ENCODE measurements at regions of chr9 and their contacts with region 1.

Region 1: DNA sequence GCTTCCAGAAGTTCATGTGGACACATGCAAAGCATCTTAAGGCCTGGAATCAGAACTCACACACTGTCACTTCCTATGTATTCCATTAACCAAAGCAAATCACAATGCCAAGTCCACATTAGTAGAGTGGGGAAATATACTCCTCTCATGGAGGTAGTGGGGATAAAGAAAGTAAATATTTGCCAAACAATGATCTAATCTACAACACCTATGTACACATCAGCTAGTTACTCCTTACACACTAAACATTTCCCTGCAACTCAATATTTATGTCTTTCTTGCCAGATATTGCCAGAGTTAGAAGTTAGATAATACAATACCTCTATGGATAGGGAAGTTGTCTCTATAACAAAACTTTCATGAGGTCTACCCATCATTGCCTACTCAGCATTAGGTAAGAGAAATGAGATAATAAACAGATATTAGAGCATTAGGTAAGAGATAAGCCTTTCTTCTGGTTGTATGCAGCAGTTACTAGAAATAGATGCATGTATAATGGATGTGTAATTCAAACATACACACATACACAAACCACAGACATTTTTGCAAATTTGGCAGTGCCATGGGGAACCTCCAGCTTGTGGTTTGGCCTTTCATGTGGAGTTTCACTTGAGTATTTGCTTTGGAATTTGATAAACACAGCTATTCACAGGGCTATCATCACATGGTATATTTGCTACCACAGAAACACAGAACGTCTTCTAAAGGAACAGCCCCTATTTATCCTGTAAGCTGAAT is 196.5 kb downstream of the TLE1 start:
- DNase-seq: peak; percentile 90
- ATAC-seq: peak; percentile 83
- H3K4me3 ChIP-seq: no peak overlapping the region
- H3K27ac ChIP-seq: peak overlapping the region; percentile 90
- H3K4me1 ChIP-seq: peaks cover 40% of the 10 kb centered on the region
- H3K27me3 ChIP-seq: no peaks in the 10 kb centered on the region
- CTCF ChIP-seq: no peak

Region 2: GRCh38 chr9:81058782-81059181 is 434.1 kb before region 1 on chr9:
- CTCF ChIA-PET with region 1: no interaction called
- POLR2A ChIA-PET with region 1: no interaction called
- intact Hi-C with region 1: no loop called
- DNase-seq: no peak
- ATAC-seq: no peak
- H3K4me3 ChIP-seq: no peak overlapping the region
- H3K27ac ChIP-seq: no peak overlapping the region
- H3K4me1 ChIP-seq: no peaks in the 10 kb centered on the region
- H3K27me3 ChIP-seq: no peaks in the 10 kb centered on the region
- CTCF ChIP-seq: no peak

Region 3: GRCh38 chr9:81125446-81126092 is 367.3 kb before region 1 on chr9:
- CTCF ChIA-PET with region 1: no interaction called
- POLR2A ChIA-PET with region 1: no interaction called
- intact Hi-C with region 1: loop called (anchors 10 kb)
- DNase-seq: peak; percentile 87
- ATAC-seq: peak; percentile 94
- H3K4me3 ChIP-seq: peak overlapping the region; percentile 9; the same call in 1 of the 2 replicates
- H3K27ac ChIP-seq: peak overlapping the region; percentile 90
- H3K4me1 ChIP-seq: peaks cover 24% of the 10 kb centered on the region
- H3K27me3 ChIP-seq: no peaks in the 10 kb centered on the region
- CTCF ChIP-seq: no peak

Region 4: GRCh38 chr9:81318549-81318948 is 174.3 kb before region 1 on chr9:
- CTCF ChIA-PET with region 1: no interaction called
- POLR2A ChIA-PET with region 1: no interaction called
- intact Hi-C with region 1: loop called (anchors 10 kb)
- DNase-seq: peak; percentile 69
- ATAC-seq: peak; percentile 97
- H3K4me3 ChIP-seq: no peak overlapping the region
- H3K27ac ChIP-seq: peak overlapping the region; percentile 21
- H3K4me1 ChIP-seq: peaks cover 14% of the 10 kb centered on the region
- H3K27me3 ChIP-seq: no peaks in the 10 kb centered on the region
- CTCF ChIP-seq: no peak

Region 5: GRCh38 chr9:81410197-81410596 is 82.7 kb before region 1 on chr9:
- CTCF ChIA-PET with region 1: no interaction called
- POLR2A ChIA-PET with region 1: no interaction called
- intact Hi-C with region 1: loop called (anchors 5 kb)
- DNase-seq: peak; percentile 90
- ATAC-seq: peak; percentile 67
- H3K4me3 ChIP-seq: peak overlapping the region; percentile 26; the same call in 1 of the 2 replicates
- H3K27ac ChIP-seq: peak overlapping the region; percentile 82
- H3K4me1 ChIP-seq: peaks cover 52% of the 10 kb centered on the region
- H3K27me3 ChIP-seq: no peaks in the 10 kb centered on the region
- CTCF ChIP-seq: no peak

Region 6: DNA sequence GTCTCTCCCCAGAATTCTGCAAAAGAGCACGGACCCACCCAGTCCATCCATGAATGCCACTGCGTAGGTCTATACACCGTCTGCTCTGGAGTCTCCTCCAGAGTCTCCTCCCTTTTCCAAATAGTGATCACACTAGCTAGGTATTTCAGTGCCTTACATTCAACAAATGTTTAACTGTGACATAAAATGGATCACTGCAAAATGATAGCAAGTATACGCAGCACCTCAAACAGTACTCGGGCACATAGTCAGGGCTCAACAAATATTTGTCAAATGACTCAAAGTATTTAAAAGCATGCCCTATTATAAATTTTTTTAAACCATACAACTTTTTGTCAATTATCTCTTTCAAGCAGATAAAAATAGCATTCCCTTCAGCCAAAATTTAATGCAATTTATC is 136.0 kb after region 1 on chr9:
- CTCF ChIA-PET with region 1: no interaction called
- POLR2A ChIA-PET with region 1: no interaction called
- intact Hi-C with region 1: loop called (anchors 1 kb)
- DNase-seq: peak; percentile 93
- ATAC-seq: peak; percentile 86
- H3K4me3 ChIP-seq: peak overlapping the region; percentile 9; the same call in 1 of the 2 replicates
- H3K27ac ChIP-seq: peak overlapping the region; percentile 91
- H3K4me1 ChIP-seq: peaks cover 56% of the 10 kb centered on the region
- H3K27me3 ChIP-seq: no peaks in the 10 kb centered on the region
- CTCF ChIP-seq: no peak

Measured in PC-3 (cell line).